Activated CD4-positive, alpha-beta T cell treated with anti-CD3 and anti-CD28 coated beads for 36 hours (primary cell): ENCODE measurements at regions of chr6 and their contacts with region 1.

Region 1: DNA sequence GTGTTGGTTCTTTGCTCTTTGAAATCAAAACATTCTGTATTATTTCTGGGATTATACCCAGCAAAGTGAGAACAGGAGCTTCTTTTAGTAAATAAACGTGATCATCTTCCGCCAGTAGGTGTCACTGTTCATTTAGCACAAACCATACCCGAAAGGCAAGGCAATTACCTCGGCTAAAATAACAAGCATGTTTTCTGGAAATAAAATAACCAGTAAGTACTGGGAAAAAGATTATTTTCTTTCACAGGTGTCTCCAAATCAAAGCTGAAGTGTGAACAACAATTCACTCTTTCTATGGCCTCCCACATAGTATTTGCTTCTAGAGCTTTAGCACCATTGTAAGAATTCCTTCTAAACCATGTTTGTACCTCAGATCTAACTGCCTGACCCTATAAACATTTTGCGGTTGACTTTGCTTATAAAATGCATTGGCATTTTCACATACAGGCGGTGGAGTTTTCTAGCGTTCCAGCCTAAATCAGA is 144.6 kb upstream of the AGPAT4 start:
- DNase-seq: peak; percentile 48
- ATAC-seq: peak; percentile 12
- H3K4me3 Mint-ChIP-seq: no peak overlapping the region
- H3K27ac Mint-ChIP-seq: no peak overlapping the region
- H3K4me1 Mint-ChIP-seq: no peaks in the 10 kb centered on the region
- H3K27me3 Mint-ChIP-seq: peaks cover 12% of the 10 kb centered on the region

Region 2: GRCh38 chr6:161272635-161273273 is 145.8 kb before region 1 on chr6:
- CTCF ChIA-PET with region 1: no interaction called
- POLR2A ChIA-PET with region 1: no interaction called
- intact Hi-C with region 1: no loop called
- DNase-seq: no peak
- ATAC-seq: no peak
- H3K4me3 Mint-ChIP-seq: peak overlapping the region; percentile 70
- H3K27ac Mint-ChIP-seq: peak overlapping the region; percentile 73
- H3K4me1 Mint-ChIP-seq: peaks cover 23% of the 10 kb centered on the region
- H3K27me3 Mint-ChIP-seq: peaks cover 6% of the 10 kb centered on the region

Region 3: GRCh38 chr6:161393839-161394364 is 24.6 kb before region 1 on chr6:
- CTCF ChIA-PET with region 1: interaction called, 18 read pairs
- POLR2A ChIA-PET with region 1: no interaction called
- intact Hi-C with region 1: no loop called
- DNase-seq: peak; percentile 75
- ATAC-seq: peak; percentile 99
- H3K4me3 Mint-ChIP-seq: no peak overlapping the region
- H3K27ac Mint-ChIP-seq: no peak overlapping the region
- H3K4me1 Mint-ChIP-seq: no peaks in the 10 kb centered on the region
- H3K27me3 Mint-ChIP-seq: peaks cover 5% of the 10 kb centered on the region

Region 4: DNA sequence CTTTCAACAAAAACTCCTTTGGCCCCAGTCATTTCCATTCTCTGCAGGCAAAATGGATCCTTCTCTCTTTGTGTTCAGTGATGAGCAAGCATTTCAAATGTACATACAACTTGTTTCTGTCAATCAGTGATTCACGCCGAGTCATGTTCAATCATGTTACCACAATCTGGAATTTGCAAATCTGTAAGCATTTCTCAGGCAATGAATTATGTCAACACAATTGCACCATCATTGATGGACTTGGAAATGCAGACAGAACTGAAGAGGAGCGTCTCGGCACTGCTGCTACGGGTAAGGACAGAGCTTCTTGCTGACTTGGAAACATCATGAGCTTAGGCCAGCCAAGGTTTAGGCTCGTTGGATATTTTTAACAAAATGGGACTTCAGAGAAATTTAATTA is 11.9 kb before region 1 on chr6:
- CTCF ChIA-PET with region 1: interaction called, 10 read pairs
- POLR2A ChIA-PET with region 1: no interaction called
- intact Hi-C with region 1: no loop called
- DNase-seq: no peak
- ATAC-seq: peak; percentile 36
- H3K4me3 Mint-ChIP-seq: no peak overlapping the region
- H3K27ac Mint-ChIP-seq: no peak overlapping the region
- H3K4me1 Mint-ChIP-seq: no peaks in the 10 kb centered on the region
- H3K27me3 Mint-ChIP-seq: no peaks in the 10 kb centered on the region

Region 5: DNA sequence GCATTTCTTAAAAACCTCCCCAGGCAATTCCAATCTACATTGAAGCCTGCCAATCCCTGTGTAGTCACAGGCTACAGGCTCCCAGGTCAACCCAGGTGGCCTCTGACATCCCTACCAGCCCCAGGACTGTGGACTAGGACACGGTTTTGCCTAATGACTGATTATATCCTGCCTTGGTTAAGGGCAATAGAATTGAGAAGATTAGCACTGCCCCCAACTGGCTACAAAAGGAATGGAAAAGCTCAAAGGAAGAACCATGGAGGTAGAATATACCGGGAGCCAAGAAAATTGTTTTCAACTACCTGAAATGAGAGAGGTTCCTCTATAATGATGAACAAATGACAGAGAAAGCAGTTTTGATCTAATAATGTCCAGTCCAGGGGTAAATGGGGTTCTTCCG is 276.5 kb after region 1 on chr6:
- CTCF ChIA-PET with region 1: interaction called, 12 read pairs
- POLR2A ChIA-PET with region 1: no interaction called
- intact Hi-C with region 1: loop called in 1 of 2 experiments (anchors 1 kb)
- DNase-seq: no peak
- ATAC-seq: no peak
- H3K4me3 Mint-ChIP-seq: no peak overlapping the region
- H3K27ac Mint-ChIP-seq: no peak overlapping the region
- H3K4me1 Mint-ChIP-seq: no peaks in the 10 kb centered on the region
- H3K27me3 Mint-ChIP-seq: no peaks in the 10 kb centered on the region

Region 6: GRCh38 chr6:161922631-161923119 is 504.2 kb after region 1 on chr6:
- CTCF ChIA-PET with region 1: interaction called, 3 read pairs
- POLR2A ChIA-PET with region 1: no interaction called
- intact Hi-C with region 1: loop called (anchors 5 kb)
- DNase-seq: peak; percentile 66
- ATAC-seq: peak; percentile 83
- H3K4me3 Mint-ChIP-seq: no peak overlapping the region
- H3K27ac Mint-ChIP-seq: no peak overlapping the region
- H3K4me1 Mint-ChIP-seq: no peaks in the 10 kb centered on the region
- H3K27me3 Mint-ChIP-seq: no peaks in the 10 kb centered on the region

Region 7: DNA sequence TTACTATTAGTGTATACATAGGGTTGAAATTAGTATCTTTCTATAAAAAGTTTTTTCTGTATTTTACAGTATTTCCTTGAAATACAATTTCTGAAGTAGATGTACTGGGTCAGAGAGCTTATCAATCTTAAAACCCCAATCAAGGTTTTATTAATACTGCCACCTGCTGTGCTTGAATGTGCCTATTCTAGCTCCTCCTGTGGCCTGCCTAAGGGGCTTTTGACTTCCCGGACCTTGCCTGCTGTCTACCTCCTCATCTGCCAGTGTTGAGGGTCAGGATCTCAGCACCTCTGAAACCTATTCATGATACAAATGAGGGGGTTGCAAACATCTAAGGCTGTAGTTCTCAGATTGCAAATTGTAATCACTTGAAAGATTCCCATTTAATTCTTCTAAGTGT is 1318.5 kb after region 1 on chr6:
- CTCF ChIA-PET with region 1: interaction called, 12 read pairs
- POLR2A ChIA-PET with region 1: no interaction called
- intact Hi-C with region 1: no loop called
- DNase-seq: no peak
- ATAC-seq: no peak
- H3K4me3 Mint-ChIP-seq: no peak overlapping the region
- H3K27ac Mint-ChIP-seq: no peak overlapping the region
- H3K4me1 Mint-ChIP-seq: peaks cover 6% of the 10 kb centered on the region
- H3K27me3 Mint-ChIP-seq: peaks cover 1% of the 10 kb centered on the region